Pancreas (tissue), 10 donors: ENCODE measurements at regions of chr1 and their contacts with region 1.

Region 1: DNA sequence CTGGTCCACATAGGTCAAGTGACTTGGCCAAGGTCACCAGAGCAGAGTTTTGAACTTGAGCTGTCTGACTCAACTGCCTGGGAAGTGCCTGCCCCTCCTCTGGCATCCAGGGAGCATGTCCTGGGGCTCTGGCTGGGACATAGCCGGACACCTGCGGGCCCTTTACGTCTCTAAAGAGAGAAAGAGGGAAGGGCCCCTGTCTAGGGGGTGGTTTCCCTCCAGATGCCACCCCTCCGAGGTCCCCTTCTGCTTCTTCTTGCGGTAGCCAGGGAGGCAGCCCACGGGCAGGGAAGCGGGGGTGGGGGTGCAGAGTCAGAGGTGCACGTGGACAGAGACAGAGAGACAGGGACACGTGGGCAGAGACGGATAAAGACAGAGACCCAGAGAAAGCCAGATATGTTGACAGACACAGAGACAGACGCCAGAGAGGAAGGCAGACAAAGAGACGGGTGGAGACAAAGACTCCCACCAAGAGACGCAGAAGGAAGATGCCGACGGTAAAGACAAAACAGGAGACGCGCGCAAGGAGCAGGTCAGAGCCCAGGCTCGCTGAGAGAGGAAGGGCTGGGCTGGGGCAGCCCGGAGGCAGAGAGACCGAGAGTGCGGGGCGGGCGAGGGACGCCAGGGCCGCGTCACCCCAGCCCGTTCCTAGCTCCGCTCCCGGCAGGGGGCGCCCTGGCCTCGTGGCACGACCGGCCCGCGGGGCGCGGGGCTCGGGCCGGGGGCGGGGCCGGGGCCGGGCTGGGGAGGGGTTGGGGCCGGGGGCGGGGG is 458 bp upstream of the ALPL start:
- DNase-seq: peak; percentile 43 to 95 (median 74)
- ATAC-seq: peak; percentile 86 to 94 (median 90)
- H3K4me3 ChIP-seq: peak overlapping the region in 1 of 4 donors; percentile 38
- H3K27ac ChIP-seq: no peak overlapping the region
- H3K4me1 ChIP-seq: no peaks in the 10 kb centered on the region
- H3K27me3 ChIP-seq: no peaks in the 10 kb centered on the region
- CTCF ChIP-seq: peak; percentile 29 to 51 (median 36)

Region 2: DNA sequence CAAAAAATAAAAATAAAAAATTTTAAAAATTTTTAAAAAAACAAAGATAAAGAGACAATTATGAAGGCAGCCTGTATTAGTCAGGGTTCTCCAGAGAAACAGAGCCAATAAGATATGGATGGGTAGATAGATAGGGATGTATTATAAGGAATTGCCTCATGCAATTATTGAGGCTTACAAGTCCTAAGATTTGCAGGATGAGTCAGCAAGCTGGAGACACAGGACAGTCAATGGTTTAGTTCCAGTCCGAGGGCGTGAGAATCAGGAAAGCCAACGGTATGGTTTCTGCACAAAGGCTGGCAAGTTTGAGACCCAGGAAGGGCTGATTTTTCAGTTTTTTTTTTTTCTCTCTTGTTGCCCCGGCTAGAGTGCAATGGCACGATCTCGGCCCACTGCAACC is 308.0 kb before region 1 on chr1:
- intact Hi-C with region 1: no loop called
- DNase-seq: no peak
- ATAC-seq: no peak
- H3K4me3 ChIP-seq: no peak overlapping the region
- H3K27ac ChIP-seq: no peak overlapping the region
- H3K4me1 ChIP-seq: no peaks in the 10 kb centered on the region
- H3K27me3 ChIP-seq: no peaks in the 10 kb centered on the region
- CTCF ChIP-seq: no peak

Region 3: DNA sequence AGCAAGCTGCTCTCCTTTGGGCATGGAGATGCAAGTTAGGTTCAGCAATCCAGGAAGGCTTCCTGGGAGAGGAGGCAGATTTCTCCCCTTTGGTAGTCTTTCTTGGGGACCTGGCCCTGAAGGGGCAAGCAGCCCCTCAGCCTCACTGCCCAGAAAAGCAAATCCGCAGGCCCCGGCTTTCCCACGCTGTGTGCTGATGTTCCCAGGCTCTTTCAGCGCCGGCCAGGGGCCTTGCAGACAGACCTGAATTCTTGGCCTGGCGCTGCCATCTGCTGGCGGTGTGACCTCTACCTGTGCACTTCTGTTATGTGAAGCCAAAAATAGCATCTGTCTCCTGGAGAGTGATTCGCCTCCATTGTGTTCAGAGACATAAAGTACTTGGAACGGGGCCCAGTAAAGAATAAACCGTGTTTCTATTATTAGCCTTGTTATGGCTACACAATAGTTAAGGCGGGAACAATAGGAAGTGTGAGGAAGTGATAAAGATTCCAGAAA is 65.3 kb after region 1 on chr1:
- intact Hi-C with region 1: loop called in 2 of 3 experiments (anchors 5 to 10 kb)
- DNase-seq: peak in 5 of 6 donors; percentile 54 to 81 (median 73)
- ATAC-seq: peak; percentile 81 to 94 (median 90)
- H3K4me3 ChIP-seq: no peak overlapping the region
- H3K27ac ChIP-seq: no peak overlapping the region
- H3K4me1 ChIP-seq: no peaks in the 10 kb centered on the region
- H3K27me3 ChIP-seq: no peaks in the 10 kb centered on the region
- CTCF ChIP-seq: peak in 1 of 4 donors; percentile 24

Region 4: DNA sequence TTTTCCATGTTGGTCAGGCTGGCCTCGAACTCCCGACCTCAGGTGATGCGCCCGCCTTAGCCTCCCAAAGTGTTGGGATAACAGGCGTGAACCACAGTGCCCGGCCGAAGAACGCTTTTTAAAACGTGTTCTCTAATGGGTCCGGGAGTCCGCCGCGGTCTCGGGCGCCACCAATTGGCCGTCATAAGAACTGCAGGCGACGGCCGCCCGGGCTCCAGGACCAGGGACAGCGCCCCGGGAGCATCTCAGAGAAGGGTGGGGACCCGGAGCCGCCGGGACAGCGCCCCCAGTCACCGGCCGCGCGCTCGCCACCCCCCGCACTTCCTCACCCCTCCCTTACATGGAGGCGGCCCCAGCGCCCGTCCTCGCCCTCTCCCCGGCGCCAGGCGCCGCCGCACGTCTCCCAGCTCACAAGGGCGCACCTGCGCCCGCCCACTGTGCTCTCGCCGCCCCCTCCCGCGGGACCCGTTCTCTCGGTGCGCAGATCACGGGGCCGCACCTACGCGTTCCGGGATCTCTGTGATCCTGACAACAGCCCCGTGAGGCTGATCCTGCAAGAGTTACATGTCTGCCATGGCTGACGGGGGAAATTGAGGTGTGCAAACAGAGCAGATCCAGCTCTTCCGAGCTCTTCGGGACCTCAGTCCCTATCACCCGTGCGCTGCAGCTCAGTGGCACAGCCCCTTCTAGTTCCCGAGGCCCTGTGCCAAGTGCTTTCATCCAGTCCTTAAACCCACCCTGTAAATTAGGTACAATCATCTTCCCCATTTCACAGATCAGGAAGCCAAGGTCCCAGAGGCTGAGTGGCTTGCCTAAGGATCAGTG is 150.5 kb after region 1 on chr1:
- intact Hi-C with region 1: loop called in 2 of 3 experiments (anchors 5 to 10 kb)
- DNase-seq: peak; percentile 63 to 94 (median 86)
- ATAC-seq: peak; percentile 81 to 91 (median 90)
- H3K4me3 ChIP-seq: peak overlapping the region in 1 of 4 donors; percentile 23
- H3K27ac ChIP-seq: no peak overlapping the region
- H3K4me1 ChIP-seq: peaks cover 0 to 12% (median 0%) of the 10 kb centered on the region in 3 donors
- H3K27me3 ChIP-seq: no peaks in the 10 kb centered on the region
- CTCF ChIP-seq: peak; percentile 93 to 98 (median 96)